A673 (cell line): ENCODE measurements at regions of chrX and their contacts with region 1.

Region 1: GRCh38 chrX:131792789-131793462 is 230.2 kb upstream of the STK26 start:
- DNase-seq: peak; percentile 91
- H3K4me3 ChIP-seq: peak overlapping the region; percentile 40
- H3K27ac ChIP-seq: peak overlapping the region; percentile 46
- H3K4me1 ChIP-seq: no peaks in the 10 kb centered on the region
- H3K27me3 ChIP-seq: no peaks in the 10 kb centered on the region
- CTCF ChIP-seq: peak; percentile 56

Region 2: DNA sequence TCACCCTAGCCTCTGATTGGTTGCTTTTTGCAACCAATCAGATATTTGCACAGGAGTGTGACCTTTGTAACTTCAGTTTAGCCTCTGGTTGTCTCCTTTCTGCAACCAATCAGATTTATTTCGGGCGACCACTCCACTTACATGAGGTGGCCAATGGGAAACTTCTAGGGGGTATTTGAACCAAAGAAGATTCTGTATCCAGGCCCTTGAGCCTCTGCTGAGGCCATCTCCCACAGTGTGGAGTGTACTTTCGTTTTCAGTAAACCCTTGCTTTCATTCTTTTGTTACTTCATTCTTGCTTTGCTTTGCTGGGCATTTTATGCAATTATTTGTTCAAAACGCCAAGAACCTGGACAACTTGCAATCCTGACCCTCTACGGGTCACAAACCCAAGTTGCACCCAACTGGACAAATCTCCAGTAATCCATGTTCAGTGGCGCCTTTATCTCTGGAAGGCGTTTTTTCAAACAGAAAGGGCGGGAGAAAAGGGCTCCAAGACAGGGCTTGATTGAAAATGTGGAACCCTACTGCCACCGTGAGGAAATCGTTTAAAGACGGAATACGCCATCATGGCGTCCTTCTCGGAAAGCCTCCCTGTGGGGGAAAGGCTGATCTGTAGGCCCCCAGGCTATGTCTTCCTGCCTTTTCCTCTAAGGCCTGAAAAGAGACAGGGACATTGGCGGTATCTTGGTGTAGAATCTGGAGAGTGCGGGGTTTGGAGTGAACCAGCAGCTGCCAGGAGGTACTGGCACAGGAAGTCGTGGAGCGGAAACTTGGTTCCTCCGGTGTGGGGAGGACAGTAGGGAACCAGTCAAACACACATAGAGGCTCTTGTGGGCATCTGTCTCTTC is 64.4 kb before region 1 on chrX:
- CTCF ChIA-PET with region 1: no interaction called
- POLR2A ChIA-PET with region 1: no interaction called
- intact Hi-C with region 1: loop called (anchors 1 kb)
- DNase-seq: peak; percentile 87
- H3K4me3 ChIP-seq: peak overlapping the region; percentile 51
- H3K27ac ChIP-seq: peak overlapping the region; percentile 91
- H3K4me1 ChIP-seq: no peaks in the 10 kb centered on the region
- H3K27me3 ChIP-seq: no peaks in the 10 kb centered on the region
- CTCF ChIP-seq: peak; percentile 53

Region 3: GRCh38 chrX:131752489-131753198 is 40.3 kb before region 1 on chrX:
- CTCF ChIA-PET with region 1: no interaction called
- POLR2A ChIA-PET with region 1: no interaction called
- intact Hi-C with region 1: loop called (anchors 2 kb)
- DNase-seq: peak; percentile 89
- H3K4me3 ChIP-seq: peak overlapping the region; percentile 47
- H3K27ac ChIP-seq: peak overlapping the region; percentile 75
- H3K4me1 ChIP-seq: peaks cover 3% of the 10 kb centered on the region
- H3K27me3 ChIP-seq: no peaks in the 10 kb centered on the region
- CTCF ChIP-seq: peak; percentile 40